ENCODE measurements at regions of chr7 and their contacts with region 1.

Region 1: DNA sequence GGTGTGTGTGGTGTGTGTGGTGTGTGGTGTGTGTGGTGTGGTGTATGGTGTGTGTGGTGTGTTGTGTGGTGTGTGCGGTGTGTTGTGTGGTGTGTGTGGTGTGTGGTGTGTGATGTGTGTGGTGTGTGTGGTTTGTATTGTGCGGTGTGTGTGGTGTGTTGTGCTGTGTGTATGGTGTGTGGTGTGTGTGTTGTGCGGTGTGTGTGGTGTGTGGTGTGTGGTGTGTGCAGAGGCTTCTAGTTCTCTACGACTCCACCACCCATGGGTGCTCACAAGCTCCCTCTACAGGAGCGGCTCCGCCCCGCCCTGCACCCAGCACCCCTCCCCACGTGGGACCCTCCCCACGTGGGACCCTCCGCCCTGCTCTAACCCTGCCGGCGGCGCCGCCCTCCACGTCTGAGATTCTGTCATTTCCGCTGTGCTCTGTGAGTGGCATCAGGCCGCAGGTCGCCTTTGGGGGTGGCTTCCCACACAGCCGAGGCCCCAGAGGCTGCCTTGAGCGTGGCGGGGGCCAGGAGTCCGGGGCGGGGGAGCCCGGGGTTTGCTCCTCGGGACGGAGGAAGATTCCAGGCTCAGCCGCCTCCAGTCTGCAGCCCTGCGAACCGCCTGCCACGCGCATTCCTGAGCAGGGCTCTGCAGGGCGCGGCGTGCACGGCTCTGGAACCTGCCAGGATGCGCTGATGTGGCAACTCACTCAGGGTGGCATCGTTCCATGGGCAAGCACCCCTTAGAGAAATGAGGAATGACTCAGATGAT is 37.0 kb upstream of the DNAJB6 start:
- DNase-seq: no peak
- ATAC-seq: peak; percentile 78
- H3K4me3 ChIP-seq: peak overlapping the region; percentile 6 to 24; a peak in 3 of 4 replicates
- H3K27ac ChIP-seq: peak overlapping the region; percentile 26
- H3K4me1 ChIP-seq: peaks cover 35% of the 10 kb centered on the region
- H3K27me3 ChIP-seq: no peaks in the 10 kb centered on the region
- CTCF ChIP-seq: peak; percentile 82; the same call in 1 of the 2 replicates

Region 2: GRCh38 chr7:157250605-157251228 is 49.1 kb before region 1 on chr7:
- CTCF ChIA-PET with region 1: no interaction called
- POLR2A ChIA-PET with region 1: no interaction called
- in situ Hi-C with region 1: no loop called
- intact Hi-C with region 1: no loop called
- DNase-seq: peak; percentile 60
- ATAC-seq: peak; percentile 80
- H3K4me3 ChIP-seq: no peak overlapping the region
- H3K27ac ChIP-seq: no peak overlapping the region
- H3K4me1 ChIP-seq: no peaks in the 10 kb centered on the region
- H3K27me3 ChIP-seq: no peaks in the 10 kb centered on the region
- CTCF ChIP-seq: peak; percentile 93

Region 3: DNA sequence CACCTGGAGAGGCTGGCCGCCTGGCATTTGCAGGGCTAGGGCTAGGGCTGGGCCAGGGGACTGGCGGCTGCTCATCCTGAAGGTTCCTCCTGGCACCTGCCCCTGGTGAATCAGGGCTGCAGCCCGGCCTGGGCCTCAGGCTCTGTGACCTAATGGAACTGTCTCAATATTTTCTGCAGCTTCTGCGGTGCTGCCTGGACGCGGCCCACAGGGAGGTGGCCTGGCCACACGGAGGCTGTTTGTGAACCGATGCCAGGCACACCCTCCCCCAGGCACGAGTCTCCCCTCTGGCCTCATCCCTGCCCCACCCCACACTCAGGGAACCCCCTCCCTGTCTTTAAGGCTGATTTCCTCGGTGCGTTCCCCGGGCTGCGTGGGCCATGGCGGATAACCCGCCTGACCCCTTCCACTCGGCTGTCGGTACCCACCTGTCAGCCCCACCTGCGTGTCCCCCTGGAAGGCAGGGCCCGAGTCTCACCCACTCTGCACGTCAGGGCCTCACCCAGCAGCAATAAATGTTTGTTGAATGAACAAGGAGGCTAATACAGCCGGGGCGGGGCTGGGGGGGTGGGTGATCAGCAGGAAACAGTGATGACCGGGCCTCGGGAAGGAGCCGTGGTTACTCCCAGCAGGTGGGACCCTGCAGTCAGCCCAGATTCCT is 17.5 kb before region 1 on chr7:
- CTCF ChIA-PET with region 1: interaction called, 3 read pairs
- POLR2A ChIA-PET with region 1: interaction called, 14 read pairs
- in situ Hi-C with region 1: no loop called
- intact Hi-C with region 1: no loop called
- DNase-seq: no peak
- ATAC-seq: peak; percentile 46
- H3K4me3 ChIP-seq: no peak overlapping the region
- H3K27ac ChIP-seq: peak overlapping the region; percentile 83
- H3K4me1 ChIP-seq: peaks cover 37% of the 10 kb centered on the region
- H3K27me3 ChIP-seq: no peaks in the 10 kb centered on the region
- CTCF ChIP-seq: no peak